ENCODE measurements at regions of chr17 and their contacts with region 1.

Region 1: DNA sequence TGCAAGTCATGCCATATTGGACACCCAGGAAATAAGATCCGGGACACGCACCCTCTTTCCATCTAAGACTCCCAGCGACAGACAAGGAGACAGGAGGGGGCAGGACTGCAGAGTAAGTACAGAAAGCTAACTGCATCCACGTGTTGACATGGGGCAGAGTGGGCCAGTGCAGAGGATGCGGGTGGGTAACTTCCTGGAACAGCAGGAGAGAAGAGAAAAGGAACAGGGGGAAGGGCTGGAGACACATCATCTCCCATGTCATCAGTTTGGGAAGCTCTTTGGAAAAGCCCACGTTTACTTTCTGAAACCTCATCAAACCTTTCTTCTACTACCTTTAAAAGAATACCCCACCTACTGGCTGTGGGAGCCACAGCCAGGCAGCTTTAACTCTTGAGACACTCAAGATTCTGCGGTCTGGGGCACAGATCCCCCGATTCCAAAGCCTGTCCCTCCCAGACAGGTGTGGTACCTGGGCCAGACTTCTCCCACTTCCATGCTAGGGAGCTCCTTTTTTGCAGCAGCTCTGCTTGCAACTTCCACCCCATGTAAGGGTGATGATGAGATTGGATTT is 273.5 kb upstream of the RPL38 start:
- DNase-seq: no peak
- H3K4me3 ChIP-seq: no peak overlapping the region
- H3K27ac ChIP-seq: no peak overlapping the region
- H3K4me1 ChIP-seq: no peaks in the 10 kb centered on the region
- H3K27me3 ChIP-seq: peaks cover 0 to 4% of the 10 kb centered on the region in 2 donors
- CTCF ChIP-seq: no peak
- POLR2A ChIP-seq: no peak

Region 2: GRCh38 chr17:73943416-73944110 is 13.6 kb after region 1 on chr17:
- intact Hi-C with region 1: loop called (anchors 1 kb)
- DNase-seq: no peak
- H3K4me3 ChIP-seq: no peak overlapping the region
- H3K27ac ChIP-seq: no peak overlapping the region
- H3K4me1 ChIP-seq: no peaks in the 10 kb centered on the region
- H3K27me3 ChIP-seq: no peaks in the 10 kb centered on the region
- CTCF ChIP-seq: no peak
- POLR2A ChIP-seq: no peak

Measured in breast epithelium (tissue), 4 donors.